ENCODE measurements at regions of chr1 and their contacts with region 1.

Region 1: DNA sequence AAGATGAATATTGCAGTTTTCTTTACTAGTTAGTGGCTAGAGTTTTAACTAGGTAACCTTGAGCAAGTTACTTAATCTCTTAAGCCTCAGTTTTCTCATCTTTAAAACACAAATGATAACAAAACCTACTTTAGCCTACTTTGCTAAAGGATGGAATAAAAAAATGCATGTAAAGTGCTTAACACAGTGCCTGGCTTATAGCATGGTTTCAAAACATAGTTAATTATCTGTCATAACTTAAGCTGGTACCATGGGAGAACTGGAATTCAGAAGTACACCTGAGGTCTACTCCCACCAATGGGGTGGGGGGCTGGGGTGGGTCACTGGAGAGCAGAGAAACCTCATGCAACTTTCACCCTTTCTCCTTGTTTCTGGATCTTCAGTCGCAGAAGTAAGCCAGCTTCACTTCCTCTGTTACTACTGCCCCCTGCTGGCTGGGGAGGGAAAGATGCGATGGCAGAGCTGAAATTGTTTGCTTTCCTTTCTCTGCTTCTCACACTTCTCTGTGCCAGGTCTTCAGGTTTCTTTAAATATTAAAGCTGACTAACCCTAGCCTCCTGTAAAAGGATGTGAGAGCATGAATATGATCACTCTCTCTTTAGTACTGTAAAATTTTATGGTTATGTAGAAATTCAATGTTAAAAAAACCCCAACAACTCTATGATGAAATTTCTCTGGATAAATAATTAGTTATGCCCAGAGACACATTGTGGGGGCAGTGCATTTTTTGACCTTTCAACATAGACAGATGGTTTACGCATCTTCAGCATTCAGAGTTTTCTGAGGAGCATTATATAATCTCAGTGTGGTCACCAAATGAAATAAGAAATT is 324.2 kb downstream of the HLX start:
- DNase-seq: peak; percentile 51 to 72
- ATAC-seq: peak; percentile 24 to 82; a peak in 4 of 6 replicates
- H3K4me3 ChIP-seq: no peak overlapping the region
- H3K27ac ChIP-seq: peak overlapping the region in 1 of 2 experiments; percentile 34; a peak in 2 of 6 replicates
- H3K4me1 ChIP-seq: peaks cover 13% of the 10 kb centered on the region; the same call in 1 of the 3 replicates
- CTCF ChIP-seq: peak; percentile 82
- EP300 ChIP-seq: no peak
- POLR2A ChIP-seq: no peak
- RAD21 ChIP-seq: peak; percentile 87 to 89

Region 2: DNA sequence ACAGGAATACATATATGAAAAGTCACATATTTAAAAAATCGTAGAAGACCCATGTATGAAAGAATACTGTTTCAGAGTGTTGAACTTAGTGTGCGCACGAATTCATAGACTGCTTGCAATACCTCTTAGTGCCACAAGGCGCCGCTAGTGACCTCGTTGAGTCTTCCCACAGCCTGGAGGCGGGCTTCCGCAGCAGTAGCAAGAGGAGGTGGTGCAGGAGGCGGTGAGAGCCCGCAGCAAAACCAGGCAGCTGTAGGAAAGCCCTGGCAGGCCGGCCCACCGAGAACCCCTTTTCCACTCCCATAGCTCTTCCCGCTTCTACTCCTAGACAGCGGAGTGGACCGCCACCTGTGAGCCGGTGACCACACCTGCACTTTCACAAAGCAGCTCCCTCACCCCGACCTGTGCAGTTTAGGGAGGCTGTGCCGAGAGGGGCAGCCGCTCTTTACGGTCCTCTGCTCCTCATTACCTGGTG is 393.2 kb before region 1 on chr1:
- CTCF ChIA-PET with region 1: interaction called, 15 read pairs
- POLR2A ChIA-PET with region 1: no interaction called
- DNase-seq: peak; percentile 57 to 77
- ATAC-seq: peak; percentile 83 to 95
- H3K4me3 ChIP-seq: no peak overlapping the region
- H3K27ac ChIP-seq: no peak overlapping the region
- H3K4me1 ChIP-seq: no peaks in the 10 kb centered on the region
- CTCF ChIP-seq: peak; percentile 79
- EP300 ChIP-seq: no peak
- POLR2A ChIP-seq: no peak
- RAD21 ChIP-seq: peak; percentile 83 to 84

Region 3: GRCh38 chr1:220873868-220874655 is 329.4 kb before region 1 on chr1:
- CTCF ChIA-PET with region 1: interaction called, 47 read pairs
- POLR2A ChIA-PET with region 1: no interaction called
- DNase-seq: peak; percentile 34 to 53
- ATAC-seq: peak; percentile 64 to 65; a peak in 4 of 6 replicates
- H3K4me3 ChIP-seq: no peak overlapping the region
- H3K27ac ChIP-seq: peak overlapping the region in 1 of 2 experiments; percentile 26; a peak in 2 of 6 replicates
- H3K4me1 ChIP-seq: peaks cover 26% of the 10 kb centered on the region; the same call in 2 of the 3 replicates
- CTCF ChIP-seq: peak; percentile 89
- EP300 ChIP-seq: no peak
- POLR2A ChIP-seq: no peak
- RAD21 ChIP-seq: peak; percentile 85 to 96

Region 4: GRCh38 chr1:220879076-220879508 is 324.3 kb before region 1 on chr1 and contains the start of gene HLX:
- CTCF ChIA-PET with region 1: interaction called, 47 read pairs
- POLR2A ChIA-PET with region 1: no interaction called
- DNase-seq: peak; percentile 80 to 98
- ATAC-seq: peak; percentile 88 to 95
- H3K4me3 ChIP-seq: peak within 1 kb of the TSS; percentile 73
- H3K27ac ChIP-seq: peak within 1 kb of the TSS; percentile 83 to 94
- H3K4me1 ChIP-seq: peaks cover 34% of the 10 kb centered on the region
- CTCF ChIP-seq: no peak
- EP300 ChIP-seq: no peak
- POLR2A ChIP-seq: 0 out of 2 replicates have a peak, but pooled peaks have one; percentile 15
- RAD21 ChIP-seq: no peak
- polyA plus RNA-seq, gene HLX: 0.70 and 0.86 TPM in 2 replicates

Region 5: DNA sequence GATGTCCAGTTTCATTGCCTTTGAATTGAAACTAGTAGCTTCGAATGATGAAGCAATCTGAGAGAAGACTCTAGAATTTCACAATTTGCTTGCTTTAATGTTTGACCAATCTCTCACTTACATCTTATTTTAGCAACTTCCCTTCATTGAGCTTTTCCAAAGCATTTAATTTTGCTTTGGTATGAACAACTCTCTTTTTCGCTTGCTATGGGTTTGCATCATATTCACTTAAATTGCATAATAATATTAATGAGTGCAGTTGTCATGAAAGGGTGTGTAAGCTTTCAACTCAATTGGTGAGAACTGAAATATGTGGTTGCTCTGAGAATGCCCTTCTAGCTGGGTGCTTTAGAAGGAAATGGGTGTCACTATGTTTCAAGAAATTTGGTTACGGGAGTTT is 15.0 kb before region 1 on chr1:
- CTCF ChIA-PET with region 1: interaction called, 15 read pairs
- POLR2A ChIA-PET with region 1: no interaction called
- DNase-seq: no peak
- ATAC-seq: no peak
- H3K4me3 ChIP-seq: no peak overlapping the region
- H3K27ac ChIP-seq: no peak overlapping the region
- H3K4me1 ChIP-seq: no peaks in the 10 kb centered on the region
- CTCF ChIP-seq: no peak
- EP300 ChIP-seq: no peak
- POLR2A ChIP-seq: no peak
- RAD21 ChIP-seq: no peak

Measured in A549 (cell line).